ENCODE measurements at regions of chr9 and their contacts with region 1.

Region 1: DNA sequence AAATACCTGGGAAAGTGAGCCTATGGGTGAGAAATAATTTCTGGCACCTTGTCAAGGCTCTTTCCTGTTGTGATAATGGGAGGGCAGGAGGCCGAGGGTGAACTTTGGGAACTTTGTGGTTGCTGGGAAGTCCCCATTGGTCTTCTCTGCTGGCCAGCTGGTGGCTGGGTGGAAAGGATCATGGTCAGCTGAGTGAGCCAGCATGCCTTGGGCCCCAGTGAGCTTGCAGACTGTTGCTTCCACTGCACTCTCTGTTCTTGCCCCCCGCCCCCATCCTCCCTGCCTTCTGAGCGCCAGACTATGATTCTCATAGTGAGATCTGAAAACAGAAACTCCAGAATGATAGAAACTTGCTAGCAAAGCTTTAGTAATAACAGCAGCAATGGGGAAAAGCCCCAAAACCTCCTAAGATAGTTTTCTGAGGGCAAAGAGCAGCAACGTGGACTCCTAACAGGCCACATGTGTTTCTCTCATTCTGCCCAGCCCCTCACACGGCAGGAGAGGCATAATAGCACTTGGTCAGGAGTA is 139.2 kb upstream of the SMARCA2 start:
- DNase-seq: peak; percentile 88
- H3K4me3 Mint-ChIP-seq: peak overlapping the region; percentile 34
- H3K27ac Mint-ChIP-seq: peak overlapping the region; percentile 48
- H3K4me1 Mint-ChIP-seq: peaks cover 46% of the 10 kb centered on the region
- H3K27me3 Mint-ChIP-seq: peaks cover 25% of the 10 kb centered on the region

Region 2: GRCh38 chr9:1470001-1470804 is 405.8 kb before region 1 on chr9:
- CTCF ChIA-PET with region 1: no interaction called
- POLR2A ChIA-PET with region 1: no interaction called
- intact Hi-C with region 1: loop called (anchors 1 kb)
- DNase-seq: no peak
- H3K4me3 Mint-ChIP-seq: no peak overlapping the region
- H3K27ac Mint-ChIP-seq: no peak overlapping the region
- H3K4me1 Mint-ChIP-seq: peaks cover 9% of the 10 kb centered on the region
- H3K27me3 Mint-ChIP-seq: peaks cover 2% of the 10 kb centered on the region

Region 3: GRCh38 chr9:1929722-1930621 is 54.0 kb after region 1 on chr9:
- CTCF ChIA-PET with region 1: no interaction called
- POLR2A ChIA-PET with region 1: no interaction called
- intact Hi-C with region 1: loop called (anchors 5 kb)
- DNase-seq: peak; percentile 24
- H3K4me3 Mint-ChIP-seq: no peak overlapping the region
- H3K27ac Mint-ChIP-seq: no peak overlapping the region
- H3K4me1 Mint-ChIP-seq: peaks cover 6% of the 10 kb centered on the region
- H3K27me3 Mint-ChIP-seq: peaks cover 3% of the 10 kb centered on the region

Region 4: GRCh38 chr9:2000314-2000713 is 124.3 kb after region 1 on chr9:
- CTCF ChIA-PET with region 1: no interaction called
- POLR2A ChIA-PET with region 1: no interaction called
- intact Hi-C with region 1: no loop called
- DNase-seq: no peak
- H3K4me3 Mint-ChIP-seq: no peak overlapping the region
- H3K27ac Mint-ChIP-seq: no peak overlapping the region
- H3K4me1 Mint-ChIP-seq: peaks cover 6% of the 10 kb centered on the region
- H3K27me3 Mint-ChIP-seq: peaks cover 2% of the 10 kb centered on the region

Region 5: DNA sequence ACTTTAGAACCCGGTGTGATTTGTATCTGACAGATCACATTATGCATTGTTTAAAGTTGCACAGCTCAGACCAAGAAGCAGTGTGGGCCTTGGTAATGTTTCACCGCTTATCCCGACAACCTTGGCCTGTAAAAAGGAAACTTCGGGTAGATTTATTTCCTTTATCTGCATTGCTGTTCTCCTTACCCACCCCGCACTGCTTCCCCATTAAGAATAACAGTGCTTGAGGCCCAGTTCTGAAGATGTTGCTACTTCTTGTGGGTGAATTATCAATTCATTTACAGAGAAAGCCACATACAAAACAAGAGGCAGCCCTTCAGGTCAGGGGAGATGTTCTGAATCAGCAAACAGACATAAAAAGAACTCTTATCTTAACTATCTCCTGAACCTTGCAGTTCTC is 147.5 kb after region 1 on chr9:
- CTCF ChIA-PET with region 1: interaction called, 3 read pairs
- POLR2A ChIA-PET with region 1: interaction called, 3 read pairs
- intact Hi-C with region 1: loop called (anchors 2 kb)
- DNase-seq: peak; percentile 53
- H3K4me3 Mint-ChIP-seq: peak overlapping the region; percentile 38
- H3K27ac Mint-ChIP-seq: peak overlapping the region; percentile 86
- H3K4me1 Mint-ChIP-seq: peaks cover 94% of the 10 kb centered on the region
- H3K27me3 Mint-ChIP-seq: no peaks in the 10 kb centered on the region

Region 6: DNA sequence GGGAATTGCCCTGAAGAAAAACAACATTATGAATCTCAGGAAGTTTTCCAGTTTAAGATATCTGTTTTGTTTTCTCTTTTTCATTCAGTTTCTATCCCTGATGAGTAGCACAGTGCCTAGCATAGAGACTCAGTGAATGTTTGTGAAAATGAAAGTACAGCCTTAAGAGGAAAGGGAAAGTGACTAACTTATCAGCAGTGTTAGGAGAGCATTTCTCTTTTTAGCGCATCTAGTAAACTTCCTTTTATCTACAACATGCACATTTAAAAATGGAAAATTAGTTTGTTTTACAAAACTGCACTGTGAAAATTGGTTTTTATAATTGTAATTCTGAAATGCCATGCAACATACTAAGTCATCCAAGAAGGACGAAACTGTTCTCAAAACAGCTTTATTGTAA is 249.9 kb after region 1 on chr9:
- CTCF ChIA-PET with region 1: no interaction called
- POLR2A ChIA-PET with region 1: no interaction called
- intact Hi-C with region 1: loop called (anchors 1 kb)
- DNase-seq: no peak
- H3K4me3 Mint-ChIP-seq: peak overlapping the region; percentile 49
- H3K27ac Mint-ChIP-seq: peak overlapping the region; percentile 71
- H3K4me1 Mint-ChIP-seq: peaks cover 39% of the 10 kb centered on the region
- H3K27me3 Mint-ChIP-seq: no peaks in the 10 kb centered on the region

Region 7: DNA sequence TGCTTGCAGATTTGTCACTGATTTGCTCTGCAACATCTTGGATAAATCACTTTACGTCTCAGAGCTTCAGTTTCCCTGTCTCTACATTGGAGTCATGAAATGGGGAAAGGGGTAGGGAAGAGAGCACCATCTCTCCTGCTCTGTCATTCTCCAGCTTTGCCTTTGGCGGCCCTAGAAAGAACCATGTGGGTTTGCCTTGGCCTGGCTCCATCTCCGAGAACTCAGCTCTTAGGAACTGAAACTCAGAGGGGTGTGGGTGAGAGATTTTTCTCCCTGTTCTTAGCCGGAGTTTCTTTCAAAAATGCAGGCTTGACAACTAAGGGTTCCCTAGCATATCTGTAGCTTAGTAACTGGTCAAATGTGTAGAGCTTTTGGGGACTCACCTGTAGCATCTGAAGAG is 262.7 kb after region 1 on chr9:
- CTCF ChIA-PET with region 1: no interaction called
- POLR2A ChIA-PET with region 1: no interaction called
- intact Hi-C with region 1: no loop called
- DNase-seq: no peak
- H3K4me3 Mint-ChIP-seq: no peak overlapping the region
- H3K27ac Mint-ChIP-seq: no peak overlapping the region
- H3K4me1 Mint-ChIP-seq: peaks cover 23% of the 10 kb centered on the region
- H3K27me3 Mint-ChIP-seq: no peaks in the 10 kb centered on the region

Region 8: DNA sequence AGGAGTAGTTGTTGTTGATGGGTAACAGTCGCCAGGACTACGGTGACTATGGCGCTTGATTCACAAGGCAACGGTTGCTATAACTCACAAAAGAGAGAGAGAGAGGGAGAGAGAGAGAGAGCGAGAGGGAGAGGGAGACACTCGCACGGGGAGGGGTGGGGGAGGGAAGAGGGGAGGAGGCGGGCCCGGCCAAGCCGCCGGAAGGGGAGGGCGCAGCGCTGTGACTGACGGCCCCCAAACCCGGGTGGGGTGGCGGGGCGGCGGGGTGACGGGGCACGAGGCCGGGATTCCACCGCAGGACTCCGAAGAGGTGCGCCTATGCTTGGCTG is 1649.8 kb after region 1 on chr9 and contains the start of gene RFX3:
- CTCF ChIA-PET with region 1: no interaction called
- POLR2A ChIA-PET with region 1: no interaction called
- intact Hi-C with region 1: loop called (anchors 5 kb)
- DNase-seq: peak; percentile 95
- H3K4me3 Mint-ChIP-seq: peak within 1 kb of the TSS; percentile 99
- H3K27ac Mint-ChIP-seq: peak within 1 kb of the TSS; percentile 99
- H3K4me1 Mint-ChIP-seq: peaks cover 42% of the 10 kb centered on the region
- H3K27me3 Mint-ChIP-seq: no peaks in the 10 kb centered on the region
- total RNA-seq, gene RFX3: 12.2 to 13.4 TPM